ENCODE measurements at regions of chr20 and their contacts with region 1.

Region 1: DNA sequence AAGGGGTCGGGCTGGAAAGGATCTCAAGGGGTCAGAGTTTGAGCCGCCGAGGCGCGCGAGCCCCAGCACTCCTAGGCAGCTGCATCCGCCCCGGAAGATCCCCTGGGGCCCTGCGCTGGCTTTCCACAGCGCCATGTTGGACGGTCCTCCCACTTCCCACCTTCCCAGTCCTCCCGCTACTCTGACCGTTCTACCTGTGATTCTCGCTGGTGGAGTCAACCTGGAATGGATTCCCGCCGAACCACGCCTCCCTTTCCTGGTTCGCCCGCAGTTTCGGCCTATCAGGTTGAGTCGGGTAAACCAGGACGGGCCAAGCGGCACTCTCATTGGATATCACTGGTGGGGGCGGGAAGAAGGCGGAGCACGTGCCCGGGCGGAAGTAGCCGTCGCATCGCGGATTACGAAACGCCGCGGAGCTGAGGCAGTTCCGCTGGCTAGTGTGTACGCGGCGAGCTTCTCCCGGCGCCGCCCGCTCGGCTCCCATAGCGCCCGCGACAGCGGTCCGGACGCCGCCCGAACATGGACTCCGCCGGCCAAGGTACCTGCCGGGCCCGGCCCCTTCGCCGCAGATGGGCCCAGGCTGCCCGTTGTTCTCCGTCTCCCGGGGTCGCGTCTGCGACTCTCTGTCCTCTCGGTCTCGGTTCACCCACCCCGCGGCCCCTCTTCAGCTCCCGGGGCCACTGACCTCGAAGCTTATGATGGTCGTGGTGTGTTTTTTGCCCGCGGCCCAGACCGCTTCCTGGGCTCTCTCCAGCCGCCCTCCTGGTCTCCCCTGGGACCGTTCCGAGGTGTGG is at the start of gene TPD52L2:
- DNase-seq: peak; percentile 99
- H3K4me3 ChIP-seq: peak within 1 kb of the TSS; percentile 62 to 77 (median 68)
- H3K27ac ChIP-seq: peak within 1 kb of the TSS; percentile 69
- H3K4me1 ChIP-seq: peaks cover 5% of the 10 kb centered on the region
- H3K27me3 ChIP-seq: no peaks in the 10 kb centered on the region
- CTCF ChIP-seq: no peak
- POLR2A ChIP-seq: peak; percentile 90
- total RNA-seq, gene TPD52L2: 114 and 123 TPM in 2 replicates

Region 2: GRCh38 chr20:63707549-63708300 is 157.3 kb before region 1 on chr20 and contains the starts of genes ARFRP1 and ZGPAT:
- CTCF ChIA-PET with region 1: interaction called, 17 read pairs
- POLR2A ChIA-PET with region 1: no interaction called
- dilution Hi-C with region 1: no loop called
- intact Hi-C with region 1: loop called (anchors 1 kb)
- DNase-seq: peak; percentile 81
- H3K4me3 ChIP-seq: peak within 1 kb of the TSS; percentile 62 to 77 (median 70)
- H3K27ac ChIP-seq: peak within 1 kb of the TSS; percentile 29
- H3K4me1 ChIP-seq: peaks cover 14% of the 10 kb centered on the region
- H3K27me3 ChIP-seq: no peaks in the 10 kb centered on the region
- CTCF ChIP-seq: no peak
- POLR2A ChIP-seq: peak; percentile 44
- total RNA-seq, gene ARFRP1: 51.6 and 56.3 TPM in 2 replicates
- total RNA-seq, gene ZGPAT: 29.3 and 31.7 TPM in 2 replicates

Region 3: DNA sequence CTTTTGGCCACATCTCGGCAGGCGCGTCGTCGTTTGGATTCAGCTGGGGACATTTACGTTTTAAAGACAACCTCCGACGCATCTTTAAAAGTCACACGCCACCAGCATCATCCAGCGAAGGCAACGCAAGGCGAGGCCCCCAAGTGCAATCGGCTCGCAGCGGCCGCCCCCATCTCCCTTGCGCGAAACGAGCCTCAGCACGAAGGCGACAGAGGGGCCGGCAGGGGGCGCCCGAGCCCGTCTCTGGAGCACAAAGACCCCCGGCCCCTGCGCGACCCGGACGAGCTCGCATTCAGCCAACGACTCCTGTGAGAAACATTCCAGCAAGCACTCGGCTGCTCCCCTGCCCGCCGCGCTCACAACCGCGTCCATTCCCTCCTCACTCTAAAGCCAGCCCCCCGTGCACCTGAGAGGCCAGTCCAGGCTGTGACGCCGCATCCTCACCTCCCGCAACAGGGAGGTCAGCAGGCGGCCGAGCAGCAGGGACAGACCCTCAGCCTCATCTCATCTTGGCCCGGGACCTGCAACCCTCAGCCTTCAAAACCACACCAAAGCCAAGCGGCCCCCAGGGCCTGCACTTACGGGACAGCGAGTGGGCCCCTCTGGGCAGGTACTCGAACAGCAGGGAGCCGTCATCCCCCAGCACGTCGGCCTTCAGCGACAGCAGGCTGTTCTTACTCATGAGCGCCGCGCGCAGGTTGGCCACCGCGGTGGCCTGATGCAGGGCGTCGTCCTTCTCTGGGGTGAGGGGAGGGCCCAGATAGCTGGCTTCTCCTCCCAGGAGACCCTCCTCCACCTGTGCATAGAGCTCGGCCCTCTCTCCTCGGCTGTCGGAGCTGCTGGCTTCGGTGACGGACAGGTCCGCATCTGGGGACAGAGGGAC is 89.7 kb before region 1 on chr20:
- CTCF ChIA-PET with region 1: interaction called, 24 read pairs
- POLR2A ChIA-PET with region 1: no interaction called
- dilution Hi-C with region 1: no loop called
- intact Hi-C with region 1: loop called (anchors 2 kb)
- DNase-seq: peak; percentile 60
- H3K4me3 ChIP-seq: peak overlapping the region in 2 of 3 experiments; percentile 17 to 26
- H3K27ac ChIP-seq: no peak overlapping the region
- H3K4me1 ChIP-seq: peaks cover 6% of the 10 kb centered on the region
- H3K27me3 ChIP-seq: no peaks in the 10 kb centered on the region
- CTCF ChIP-seq: peak; percentile 86 to 94
- POLR2A ChIP-seq: no peak

Region 4: GRCh38 chr20:63831696-63832686 is 33.1 kb before region 1 on chr20:
- CTCF ChIA-PET with region 1: no interaction called
- POLR2A ChIA-PET with region 1: interaction called, 3 read pairs
- dilution Hi-C with region 1: no loop called
- intact Hi-C with region 1: loop called (anchors 5 kb)
- DNase-seq: no peak
- H3K4me3 ChIP-seq: peak overlapping the region in 2 of 3 experiments; percentile 9 to 36
- H3K27ac ChIP-seq: no peak overlapping the region
- H3K4me1 ChIP-seq: peaks cover 7% of the 10 kb centered on the region
- H3K27me3 ChIP-seq: peaks cover 16 to 32% of the 10 kb centered on the region in 2 experiments
- CTCF ChIP-seq: no peak
- POLR2A ChIP-seq: no peak

Region 5: GRCh38 chr20:63911176-63911575 is 46.1 kb after region 1 on chr20:
- CTCF ChIA-PET with region 1: no interaction called
- POLR2A ChIA-PET with region 1: no interaction called
- dilution Hi-C with region 1: no loop called
- intact Hi-C with region 1: no loop called
- DNase-seq: no peak
- H3K4me3 ChIP-seq: no peak overlapping the region
- H3K27ac ChIP-seq: no peak overlapping the region
- H3K4me1 ChIP-seq: no peaks in the 10 kb centered on the region
- H3K27me3 ChIP-seq: no peaks in the 10 kb centered on the region
- CTCF ChIP-seq: no peak
- POLR2A ChIP-seq: no peak

Region 6: DNA sequence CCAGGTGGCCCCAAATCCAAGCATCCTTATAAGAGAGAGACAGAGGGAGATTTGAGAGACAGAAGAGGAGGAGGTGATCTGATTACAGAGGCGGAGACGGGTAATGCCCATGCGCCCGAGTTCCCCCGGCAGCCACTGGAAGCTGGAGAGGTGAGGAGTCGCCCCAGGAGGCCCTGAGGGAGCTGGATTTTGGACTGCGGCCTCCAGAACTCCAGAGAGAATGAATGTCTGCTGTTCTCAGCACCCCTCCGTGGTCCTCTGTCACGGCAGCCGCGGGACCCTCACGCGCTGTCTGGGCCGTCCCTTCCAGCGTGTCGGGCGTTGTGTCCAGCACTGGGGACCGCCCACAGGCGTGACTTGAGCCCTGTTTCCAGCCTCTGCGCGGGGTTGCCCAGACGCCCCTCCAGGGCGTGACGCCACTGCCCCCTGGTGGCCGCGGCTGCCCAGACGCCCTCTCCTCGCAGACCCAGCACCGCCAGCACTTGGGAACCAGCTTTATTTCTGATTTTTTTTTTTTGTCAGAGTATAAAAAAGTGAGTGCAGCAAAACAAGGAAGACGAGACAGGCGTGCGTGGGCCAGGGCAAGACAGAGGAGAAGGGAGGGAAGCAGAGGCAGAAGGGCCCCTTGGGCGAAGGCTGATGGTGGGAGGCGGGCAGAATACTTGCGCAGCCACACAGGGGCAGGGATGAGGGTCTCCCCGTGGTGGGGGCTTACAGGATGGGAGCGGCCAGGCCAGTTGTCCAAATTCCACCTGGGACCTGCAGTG is 108.8 kb after region 1 on chr20:
- CTCF ChIA-PET with region 1: interaction called, 13 read pairs
- POLR2A ChIA-PET with region 1: interaction called, 9 read pairs
- dilution Hi-C with region 1: no loop called
- intact Hi-C with region 1: loop called (anchors 2 kb)
- DNase-seq: peak; percentile 87
- H3K4me3 ChIP-seq: peak overlapping the region in 2 of 3 experiments; percentile 7 to 35
- H3K27ac ChIP-seq: no peak overlapping the region
- H3K4me1 ChIP-seq: peaks cover 23% of the 10 kb centered on the region
- H3K27me3 ChIP-seq: no peaks in the 10 kb centered on the region
- CTCF ChIP-seq: peak; percentile 99
- POLR2A ChIP-seq: peak; percentile 63

Measured in endothelial cell of umbilical vein (primary cell).